Heart left ventricle (tissue), 16 donors: ENCODE measurements at regions of chr1 and their contacts with region 1.

Region 1: GRCh38 chr1:225474986-225475820 is 47.4 kb upstream of the LBR start:
- DNase-seq: peak; percentile 62 to 88 (median 66)
- ATAC-seq: peak; percentile 69 to 91 (median 88)
- H3K4me3 ChIP-seq: peak overlapping the region in 5 of 12 donors; percentile 10 to 35 (median 26)
- H3K27ac ChIP-seq: peak overlapping the region in 1 of 12 donors; percentile 13
- H3K4me1 ChIP-seq: peaks cover 0 to 11% (median 5%) of the 10 kb centered on the region in 12 donors
- H3K27me3 ChIP-seq: no peaks in the 10 kb centered on the region
- CTCF ChIP-seq: peak in 11 of 12 donors; percentile 100
- POLR2A ChIP-seq: no peak

Region 2: DNA sequence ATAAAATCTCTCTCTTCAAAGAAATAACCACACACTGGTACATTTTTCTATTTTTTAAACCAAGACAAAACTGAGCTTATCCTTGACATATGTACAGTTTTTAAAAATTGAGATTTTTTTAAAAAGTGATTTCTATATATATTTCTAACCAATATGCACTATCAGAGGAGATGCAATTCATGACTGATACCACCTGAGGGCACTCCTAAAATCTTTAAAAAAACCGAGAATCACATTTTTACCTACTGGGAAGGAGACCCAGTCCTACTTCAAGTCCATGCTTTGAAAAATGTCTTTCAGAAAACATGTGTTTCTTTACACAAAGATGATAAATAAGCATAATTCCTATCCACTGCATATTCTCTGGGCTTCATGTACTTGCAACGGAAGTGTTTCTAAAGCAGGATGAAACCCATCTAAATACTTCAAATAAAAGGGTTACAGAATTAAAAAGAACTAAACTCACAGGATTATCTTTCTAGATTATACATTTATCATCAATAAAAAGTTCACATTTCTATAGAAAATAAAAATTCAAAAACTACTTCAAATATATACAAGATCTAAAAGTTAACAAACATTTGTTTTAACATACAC is 79.1 kb after region 1 on chr1:
- intact Hi-C with region 1: loop called in 1 of 10 experiments (anchors 5 kb)
- DNase-seq: no peak
- ATAC-seq: peak in 1 of 4 donors; percentile 43
- H3K4me3 ChIP-seq: no peak overlapping the region
- H3K27ac ChIP-seq: no peak overlapping the region
- H3K4me1 ChIP-seq: peaks cover 0 to 24% (median 5%) of the 10 kb centered on the region in 12 donors
- H3K27me3 ChIP-seq: no peaks in the 10 kb centered on the region
- CTCF ChIP-seq: peak; percentile 39 to 73 (median 60)
- POLR2A ChIP-seq: no peak

Region 3: DNA sequence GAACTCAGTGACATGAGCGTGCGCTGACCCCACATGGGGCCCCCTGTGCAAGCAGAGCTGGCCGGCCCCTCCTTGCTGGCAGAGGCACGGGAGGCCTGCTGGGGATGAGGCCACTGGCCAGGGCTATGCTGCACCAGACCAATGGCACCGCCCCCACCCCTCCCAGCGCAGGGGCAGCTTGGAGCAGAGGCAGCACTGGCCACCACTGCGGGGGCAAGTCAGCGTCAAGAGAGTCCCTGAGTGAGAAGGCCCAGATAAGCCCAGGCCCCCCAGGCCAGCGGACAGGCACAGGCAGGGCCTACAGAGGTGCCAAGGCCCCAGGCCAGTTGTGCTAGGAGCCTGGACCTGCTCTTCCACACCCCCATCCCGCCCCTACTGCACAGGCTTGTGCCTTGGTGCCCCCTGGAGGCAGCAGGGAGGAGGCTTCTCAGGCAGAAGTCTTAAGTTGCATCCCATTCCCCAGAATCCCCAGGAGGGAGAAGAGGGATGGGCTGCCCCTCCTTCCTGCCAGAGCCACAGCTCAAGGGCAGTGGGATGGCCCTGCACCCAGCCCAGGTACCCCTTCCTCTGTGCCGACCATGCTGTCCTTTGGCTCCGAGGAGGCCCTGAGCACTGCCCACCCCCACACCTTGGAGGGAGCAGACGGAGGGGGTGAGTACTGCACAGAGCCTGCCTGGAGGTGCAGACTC is 370.5 kb after region 1 on chr1:
- intact Hi-C with region 1: loop called in 7 of 10 experiments (anchors 1 to 5 kb)
- DNase-seq: peak; percentile 77 to 87 (median 82)
- ATAC-seq: peak; percentile 66 to 83 (median 82)
- H3K4me3 ChIP-seq: no peak overlapping the region
- H3K27ac ChIP-seq: peak overlapping the region in 6 of 12 donors; percentile 6 to 71 (median 17)
- H3K4me1 ChIP-seq: peaks cover 0 to 30% (median 16%) of the 10 kb centered on the region in 12 donors
- H3K27me3 ChIP-seq: no peaks in the 10 kb centered on the region
- CTCF ChIP-seq: peak; percentile 56 to 87 (median 74)
- POLR2A ChIP-seq: no peak